IMR-90 (cell line): ENCODE measurements at regions of chr16 and their contacts with region 1.

Region 1: GRCh38 chr16:17691106-17691898 is 220.5 kb upstream of the XYLT1 start:
- DNase-seq: no peak
- ATAC-seq: no peak
- H3K4me3 ChIP-seq: no peak overlapping the region
- H3K27ac ChIP-seq: no peak overlapping the region
- H3K4me1 ChIP-seq: no peaks in the 10 kb centered on the region
- H3K27me3 ChIP-seq: no peaks in the 10 kb centered on the region; the same call in 1 of the 2 replicates
- CTCF ChIP-seq: no peak
- POLR2A ChIP-seq: no peak
- RAD21 ChIP-seq: no peak

Region 2: GRCh38 chr16:17817260-17817659 is 126.0 kb after region 1 on chr16:
- CTCF ChIA-PET with region 1: no interaction called
- POLR2A ChIA-PET with region 1: interaction called, 16 read pairs
- dilution Hi-C with region 1: no loop called
- in situ Hi-C with region 1: no loop called
- intact Hi-C with region 1: no loop called
- DNase-seq: no peak
- ATAC-seq: no peak
- H3K4me3 ChIP-seq: no peak overlapping the region
- H3K27ac ChIP-seq: no peak overlapping the region
- H3K4me1 ChIP-seq: no peaks in the 10 kb centered on the region
- H3K27me3 ChIP-seq: no peaks in the 10 kb centered on the region; the same call in 1 of the 2 replicates
- CTCF ChIP-seq: no peak
- POLR2A ChIP-seq: no peak
- RAD21 ChIP-seq: no peak

Region 3: DNA sequence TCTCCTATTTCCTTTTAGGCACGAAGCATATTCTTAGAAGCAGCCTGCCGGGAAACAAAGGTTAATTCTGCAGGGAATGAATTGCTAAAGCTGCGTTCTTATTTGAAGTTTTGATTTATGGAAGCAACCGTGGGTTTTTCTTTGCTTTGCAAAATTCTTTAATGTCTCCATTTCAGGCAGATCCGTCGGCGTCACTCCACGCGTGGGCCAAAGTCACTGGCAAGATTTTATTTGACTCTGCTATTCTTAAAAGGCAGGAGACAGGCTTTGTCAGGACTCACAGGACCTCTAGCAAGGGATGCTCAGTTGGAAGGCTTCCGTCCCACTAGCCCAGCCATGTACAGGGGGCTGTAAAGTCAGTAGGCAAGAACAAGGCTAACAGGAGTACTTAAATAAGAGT is 166.8 kb after region 1 on chr16:
- CTCF ChIA-PET with region 1: no interaction called
- POLR2A ChIA-PET with region 1: no interaction called
- dilution Hi-C with region 1: no loop called
- in situ Hi-C with region 1: no loop called
- intact Hi-C with region 1: no loop called
- DNase-seq: no peak
- ATAC-seq: no peak
- H3K4me3 ChIP-seq: no peak overlapping the region
- H3K27ac ChIP-seq: no peak overlapping the region
- H3K4me1 ChIP-seq: no peaks in the 10 kb centered on the region
- H3K27me3 ChIP-seq: no peaks in the 10 kb centered on the region
- CTCF ChIP-seq: no peak
- POLR2A ChIP-seq: no peak
- RAD21 ChIP-seq: no peak